ENCODE measurements at regions of chr9 and their contacts with region 1.

Region 1: GRCh38 chr9:97615439-97616072 is 17.6 kb downstream of the TSTD2 start:
- DNase-seq: peak; percentile 64
- CTCF ChIP-seq: peak; percentile 83

Region 2: GRCh38 chr9:97398999-97399758 is 216.4 kb before region 1 on chr9:
- in situ Hi-C with region 1: loop called (anchors 10 kb)
- DNase-seq: peak; percentile 84
- CTCF ChIP-seq: peak; percentile 99

Region 3: GRCh38 chr9:97468658-97469448 is 146.7 kb before region 1 on chr9:
- in situ Hi-C with region 1: loop called (anchors 5 kb)
- DNase-seq: peak; percentile 64
- CTCF ChIP-seq: peak; percentile 64

Measured in GM13976 (cell line).